ENCODE measurements at regions of chr10 and their contacts with region 1.

Region 1: GRCh38 chr10:12129222-12130111 is at the start of gene SEC61A2:
- DNase-seq: peak; percentile 97
- H3K4me3 Mint-ChIP-seq: peak within 1 kb of the TSS; percentile 87
- H3K27ac Mint-ChIP-seq: peak within 1 kb of the TSS; percentile 71
- H3K4me1 Mint-ChIP-seq: peaks cover 25% of the 10 kb centered on the region
- H3K27me3 Mint-ChIP-seq: no peaks in the 10 kb centered on the region
- total RNA-seq, gene SEC61A2: 14.8 and 17.5 TPM in 2 replicates

Region 2: GRCh38 chr10:12042797-12043651 is 86.4 kb before region 1 on chr10 and contains the start of gene UPF2:
- intact Hi-C with region 1: loop called (anchors 1 kb)
- DNase-seq: peak; percentile 95
- H3K4me3 Mint-ChIP-seq: peak within 1 kb of the TSS; percentile 99
- H3K27ac Mint-ChIP-seq: peak within 1 kb of the TSS; percentile 96
- H3K4me1 Mint-ChIP-seq: peaks cover 23% of the 10 kb centered on the region
- H3K27me3 Mint-ChIP-seq: no peaks in the 10 kb centered on the region
- total RNA-seq, gene UPF2: 41.0 and 41.4 TPM in 2 replicates

Region 3: GRCh38 chr10:12068449-12069269 is 60.8 kb before region 1 on chr10 and contains the start of gene DHTKD1:
- intact Hi-C with region 1: loop called (anchors 1 kb)
- DNase-seq: peak; percentile 99
- H3K4me3 Mint-ChIP-seq: peak within 1 kb of the TSS; percentile 77
- H3K27ac Mint-ChIP-seq: peak within 1 kb of the TSS; percentile 86
- H3K4me1 Mint-ChIP-seq: peaks cover 16% of the 10 kb centered on the region
- H3K27me3 Mint-ChIP-seq: peaks cover 2% of the 10 kb centered on the region
- total RNA-seq, gene DHTKD1: 20.6 and 21.1 TPM in 2 replicates

Region 4: DNA sequence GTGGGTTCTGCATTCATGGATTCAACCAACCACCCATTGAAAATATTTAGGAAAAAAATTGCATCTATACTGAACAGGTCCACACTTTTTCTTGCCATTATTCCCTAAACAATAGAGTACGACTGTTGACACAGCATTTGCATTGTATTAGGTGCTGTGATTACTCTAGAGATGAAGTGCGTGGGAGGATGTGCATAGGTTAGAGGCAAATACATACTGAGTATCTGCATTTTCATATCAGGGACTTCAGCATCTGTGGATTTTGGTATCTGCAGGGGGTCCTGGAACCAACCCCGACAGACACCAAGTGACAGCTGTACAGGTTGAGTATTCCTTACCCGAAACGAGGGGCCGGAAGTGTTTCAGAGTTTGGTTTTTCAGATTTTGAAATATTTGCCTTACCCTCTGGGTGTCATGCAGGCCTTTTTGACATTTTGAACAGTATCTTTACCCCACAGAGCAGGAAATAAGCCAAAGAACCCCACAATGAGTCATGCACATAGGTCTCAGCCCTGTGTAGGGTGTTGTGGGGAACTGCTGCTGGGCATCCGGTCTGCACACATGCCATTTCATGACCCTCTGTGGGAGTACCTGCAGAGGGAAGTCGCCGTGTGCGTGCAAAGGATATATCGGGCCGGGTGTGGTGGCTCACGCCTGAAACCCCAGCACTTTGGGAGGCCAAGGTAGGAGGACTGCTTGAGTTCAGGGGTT is 51.8 kb after region 1 on chr10:
- intact Hi-C with region 1: loop called (anchors 1 kb)
- DNase-seq: peak; percentile 69
- H3K4me3 Mint-ChIP-seq: peak overlapping the region; percentile 13
- H3K27ac Mint-ChIP-seq: peak overlapping the region; percentile 88
- H3K4me1 Mint-ChIP-seq: peaks cover 26% of the 10 kb centered on the region
- H3K27me3 Mint-ChIP-seq: no peaks in the 10 kb centered on the region